Activated CD4-positive, alpha-beta memory T cell treated with anti-CD3 and anti-CD28 coated beads, Interleukin-2, amount 10 ng/mL, durations not matched to agents 7 days and 5 days (primary cell): ENCODE measurements at regions of chr3 and their contacts with region 1.

Region 1: GRCh38 chr3:14377348-14378169 is 24.8 kb upstream of the SLC6A6 start:
- DNase-seq: peak; percentile 79
- H3K4me3 Mint-ChIP-seq: no peak overlapping the region
- H3K27ac Mint-ChIP-seq: peak overlapping the region; percentile 88
- H3K4me1 Mint-ChIP-seq: peaks cover 38% of the 10 kb centered on the region
- H3K27me3 Mint-ChIP-seq: peaks cover 6% of the 10 kb centered on the region

Region 2: DNA sequence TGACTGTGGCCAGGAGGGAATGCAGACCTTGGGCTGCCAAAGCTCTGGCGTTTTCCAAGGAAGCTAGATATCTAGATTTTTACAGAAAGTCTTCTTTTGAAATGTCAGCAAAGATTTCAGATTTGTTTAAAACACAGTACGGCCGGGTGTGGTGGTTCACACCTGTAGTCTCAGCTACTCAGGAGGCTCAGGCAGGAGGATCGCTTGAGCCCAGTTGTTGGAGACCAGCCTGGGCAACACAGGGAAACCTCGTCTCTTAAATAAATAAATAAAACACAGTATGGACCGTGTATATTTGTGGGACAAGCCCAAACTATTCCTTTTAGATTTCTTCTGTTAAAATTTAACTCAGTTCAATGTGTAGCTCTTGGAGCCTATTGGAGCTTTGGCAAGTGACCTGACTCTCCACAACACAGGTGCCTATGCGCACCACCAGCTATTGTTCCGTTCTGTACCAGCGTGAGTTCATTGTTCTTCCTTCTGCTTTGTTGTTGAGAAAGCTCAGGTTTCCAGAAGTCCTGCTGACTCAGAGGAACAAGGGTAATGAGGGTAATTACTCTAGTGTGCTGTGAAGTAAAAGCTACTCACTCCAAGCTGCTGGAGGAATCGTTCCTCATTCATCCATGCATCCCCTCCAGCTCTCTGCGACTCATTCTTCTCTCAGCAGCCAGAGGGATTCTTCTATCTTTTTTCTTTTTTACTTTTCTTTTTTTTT is 48.3 kb before region 1 on chr3:
- CTCF ChIA-PET with region 1: no interaction called
- POLR2A ChIA-PET with region 1: no interaction called
- DNase-seq: no peak
- H3K4me3 Mint-ChIP-seq: no peak overlapping the region
- H3K27ac Mint-ChIP-seq: no peak overlapping the region
- H3K4me1 Mint-ChIP-seq: no peaks in the 10 kb centered on the region
- H3K27me3 Mint-ChIP-seq: peaks cover 12% of the 10 kb centered on the region

Region 3: GRCh38 chr3:14426063-14426620 is 48.6 kb after region 1 on chr3:
- CTCF ChIA-PET with region 1: interaction called, 5 read pairs
- POLR2A ChIA-PET with region 1: interaction called, 17 read pairs
- DNase-seq: peak; percentile 76
- H3K4me3 Mint-ChIP-seq: peak overlapping the region; percentile 49
- H3K27ac Mint-ChIP-seq: peak overlapping the region; percentile 76
- H3K4me1 Mint-ChIP-seq: peaks cover 86% of the 10 kb centered on the region
- H3K27me3 Mint-ChIP-seq: no peaks in the 10 kb centered on the region

Region 4: DNA sequence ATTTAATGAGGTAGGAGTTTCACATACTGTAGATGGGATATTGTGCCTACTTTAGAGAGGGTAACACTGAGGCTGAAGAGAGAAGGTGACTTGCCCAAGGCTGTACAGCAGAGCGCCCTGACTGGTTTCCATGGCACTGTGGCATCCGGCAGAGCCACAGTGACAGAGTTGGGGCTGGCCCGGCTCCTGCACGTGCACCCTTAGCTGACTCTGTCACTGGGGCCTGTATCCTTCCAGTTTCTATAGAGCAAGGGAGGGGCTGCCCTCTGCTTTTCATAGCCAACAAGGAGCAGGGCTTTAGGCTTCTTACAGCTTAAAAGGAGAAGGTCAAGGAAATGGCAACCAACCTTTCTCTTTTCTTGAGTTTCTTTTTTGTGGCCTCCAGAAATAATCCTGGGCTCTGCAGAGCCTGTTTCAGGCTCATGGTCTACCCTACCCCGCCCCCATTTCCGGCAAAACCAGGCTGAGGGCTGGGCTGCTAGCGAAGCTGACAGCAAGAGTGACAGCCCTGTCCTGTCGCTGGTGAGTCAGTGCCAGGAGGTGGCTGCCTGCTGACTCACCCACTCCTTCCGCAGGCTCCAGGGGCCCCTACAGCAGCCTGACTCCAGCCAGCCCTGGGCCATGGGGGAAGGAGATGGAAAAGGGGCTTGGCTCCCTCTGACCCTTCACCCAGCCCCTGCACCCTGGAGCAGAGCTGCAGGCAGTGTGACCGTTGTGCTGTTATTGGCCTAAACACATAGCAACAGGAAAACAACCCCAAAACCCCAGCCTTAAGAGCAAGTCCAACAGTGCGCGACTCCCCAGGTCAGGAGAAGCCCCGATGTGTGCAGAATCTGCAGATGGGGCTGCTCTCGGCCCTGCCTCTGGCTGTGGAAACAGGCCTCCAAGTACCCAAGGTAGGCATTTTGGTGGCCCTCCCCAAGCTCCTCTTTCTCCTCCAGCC is 54.6 kb after region 1 on chr3:
- CTCF ChIA-PET with region 1: interaction called, 5 read pairs
- POLR2A ChIA-PET with region 1: interaction called, 17 read pairs
- DNase-seq: peak; percentile 96
- H3K4me3 Mint-ChIP-seq: peak overlapping the region; percentile 75
- H3K27ac Mint-ChIP-seq: peak overlapping the region; percentile 100
- H3K4me1 Mint-ChIP-seq: peaks cover 89% of the 10 kb centered on the region
- H3K27me3 Mint-ChIP-seq: no peaks in the 10 kb centered on the region